HEK293 (cell line): ENCODE measurements at regions of chr17 and their contacts with region 1.

Region 1: DNA sequence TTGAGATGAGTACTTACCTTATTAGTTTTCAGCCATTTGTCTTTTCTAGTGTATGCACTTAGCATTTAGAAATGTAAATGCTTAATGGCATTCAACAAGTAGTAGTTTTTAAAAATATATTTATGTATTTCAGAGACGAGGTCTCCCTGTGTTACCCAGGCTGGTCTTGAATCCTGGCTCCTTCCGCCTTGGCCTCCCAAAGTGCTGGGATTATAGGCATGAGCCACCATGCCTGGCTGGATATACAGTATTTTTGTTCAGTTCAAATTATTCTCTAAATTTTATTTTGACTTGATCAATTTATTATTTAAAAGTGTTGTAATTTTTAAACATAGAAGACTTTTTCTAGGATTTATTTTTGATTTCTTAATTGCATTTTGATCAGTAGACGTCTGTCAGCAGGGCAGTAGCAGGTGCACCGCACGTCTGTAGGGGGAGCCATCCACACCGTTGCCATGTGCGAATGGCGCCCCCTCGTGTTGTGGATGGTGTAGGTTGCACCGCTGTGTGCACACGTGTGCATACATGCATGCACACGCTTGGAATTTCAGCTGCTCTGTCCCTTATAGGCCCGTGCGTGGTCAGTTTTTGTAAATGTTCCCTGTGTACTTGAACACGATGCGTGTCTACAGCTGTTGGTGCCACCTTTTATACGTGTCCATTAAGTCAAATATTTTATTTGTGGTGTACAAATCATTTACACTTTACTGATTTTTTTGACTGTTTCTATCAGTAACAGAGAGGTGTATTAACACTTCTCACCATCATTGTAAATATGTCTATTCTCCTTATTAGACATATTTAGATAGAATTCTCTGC is 30.6 kb downstream of the RPTOR start:
- H3K4me3 ChIP-seq: no peak overlapping the region
- H3K27ac ChIP-seq: no peak overlapping the region
- H3K4me1 ChIP-seq: no peaks in the 10 kb centered on the region
- CTCF ChIP-seq: peak; percentile 98

Region 2: GRCh38 chr17:80406146-80406545 is 169.1 kb before region 1 on chr17:
- CTCF ChIA-PET with region 1: no interaction called
- POLR2A ChIA-PET with region 1: no interaction called
- H3K4me3 ChIP-seq: no peak overlapping the region
- H3K27ac ChIP-seq: no peak overlapping the region
- H3K4me1 ChIP-seq: 0 out of 2 replicates have a peak, but pooled peaks cover 4% of the 10 kb centered on the region
- CTCF ChIP-seq: no peak

Region 3: GRCh38 chr17:80441133-80441578 is 134.1 kb before region 1 on chr17:
- CTCF ChIA-PET with region 1: interaction called, 13 read pairs
- POLR2A ChIA-PET with region 1: no interaction called
- H3K4me3 ChIP-seq: no peak overlapping the region
- H3K27ac ChIP-seq: no peak overlapping the region
- H3K4me1 ChIP-seq: no peaks in the 10 kb centered on the region
- CTCF ChIP-seq: no peak

Region 4: DNA sequence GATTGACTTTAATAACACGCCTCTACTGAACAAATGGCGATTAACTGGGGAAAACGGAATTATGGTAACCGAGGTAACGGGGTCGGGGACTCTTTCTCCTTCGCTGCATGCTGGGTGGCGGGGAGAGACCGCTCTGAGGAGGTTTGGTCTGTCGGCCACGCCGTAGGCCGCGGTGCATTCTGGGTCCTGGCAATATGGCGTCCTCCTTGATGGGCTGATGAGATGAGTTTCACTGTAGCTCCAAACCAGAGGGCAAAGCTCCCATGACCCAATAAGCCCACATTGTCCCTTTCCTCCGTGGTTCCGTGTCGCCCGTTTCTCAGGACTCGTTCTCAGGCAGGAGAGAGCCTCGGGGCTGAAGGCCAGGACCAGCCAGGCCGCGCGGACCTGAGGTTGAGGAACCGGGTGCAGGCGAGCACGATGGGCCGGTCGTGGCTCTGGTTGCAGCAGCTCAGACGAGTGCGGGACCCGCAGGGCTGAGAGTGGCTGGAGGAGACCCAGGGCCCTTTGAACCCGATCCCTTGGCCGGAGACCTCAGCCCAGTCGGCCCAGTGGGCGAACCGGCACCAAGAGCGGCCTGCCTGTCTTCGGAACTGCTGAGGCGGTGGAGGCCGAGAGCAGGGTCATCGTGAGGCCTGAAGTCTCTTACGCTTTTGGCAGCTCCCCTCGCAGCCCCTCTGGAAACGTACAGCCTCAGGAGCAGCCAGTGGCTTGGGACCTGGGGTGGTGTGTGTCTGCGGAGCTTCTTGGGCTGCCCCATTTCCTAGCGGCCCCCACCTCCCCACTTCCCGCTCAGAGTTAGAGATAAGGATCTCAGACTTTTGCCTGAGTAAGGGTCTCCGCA is 30.4 kb before region 1 on chr17 and contains the start of gene RPTOR:
- CTCF ChIA-PET with region 1: interaction called, 25 read pairs
- POLR2A ChIA-PET with region 1: no interaction called
- H3K4me3 ChIP-seq: peak within 1 kb of the TSS; percentile 99
- H3K27ac ChIP-seq: peak within 1 kb of the TSS; percentile 68
- H3K4me1 ChIP-seq: peaks cover 10% of the 10 kb centered on the region
- CTCF ChIP-seq: no peak

Region 5: GRCh38 chr17:80586846-80587228 is 11.6 kb after region 1 on chr17:
- CTCF ChIA-PET with region 1: interaction called, 31 read pairs
- POLR2A ChIA-PET with region 1: no interaction called
- H3K4me3 ChIP-seq: no peak overlapping the region
- H3K27ac ChIP-seq: no peak overlapping the region
- H3K4me1 ChIP-seq: no peaks in the 10 kb centered on the region
- CTCF ChIP-seq: no peak

Region 6: DNA sequence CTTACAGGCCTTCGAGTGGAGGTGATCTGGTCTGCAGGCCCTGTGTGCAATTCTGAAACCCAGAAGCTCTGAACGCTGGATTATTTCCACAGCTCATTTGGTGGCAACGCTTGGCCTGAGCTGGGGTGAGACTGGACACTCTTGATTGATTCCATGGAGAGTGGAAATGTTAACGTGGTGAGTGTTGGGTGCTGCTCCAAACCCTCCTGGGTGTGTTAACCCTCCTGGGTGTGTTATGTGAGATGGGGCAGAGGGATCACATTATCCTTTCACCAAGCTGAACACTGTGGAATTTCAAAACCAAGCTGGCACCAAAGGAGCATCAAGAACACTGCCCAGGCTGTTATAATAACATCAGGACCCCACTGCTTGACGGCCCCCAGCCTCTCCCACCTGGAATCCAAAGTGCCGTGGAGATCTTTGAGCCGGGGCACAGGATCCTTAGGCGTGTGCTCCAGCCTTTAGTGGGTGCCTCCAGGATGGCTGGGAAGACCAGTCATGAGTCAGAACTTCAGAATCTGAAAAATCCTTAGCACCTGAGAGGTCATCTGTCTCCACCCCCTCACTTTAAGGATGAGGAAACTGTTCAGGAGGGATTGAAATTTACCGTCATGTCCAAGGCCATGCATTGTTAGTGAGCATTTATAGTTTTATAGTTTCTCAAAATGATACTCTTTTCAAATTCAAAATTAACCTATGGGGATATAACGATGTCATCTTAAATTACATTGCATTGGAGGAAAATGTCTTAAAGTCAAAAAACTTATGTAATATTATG is 44.5 kb after region 1 on chr17:
- CTCF ChIA-PET with region 1: interaction called, 14 read pairs
- POLR2A ChIA-PET with region 1: no interaction called
- H3K4me3 ChIP-seq: no peak overlapping the region
- H3K27ac ChIP-seq: no peak overlapping the region
- H3K4me1 ChIP-seq: peaks cover 8% of the 10 kb centered on the region
- CTCF ChIP-seq: no peak

Region 7: GRCh38 chr17:80682372-80682771 is 107.1 kb after region 1 on chr17:
- CTCF ChIA-PET with region 1: no interaction called
- POLR2A ChIA-PET with region 1: no interaction called
- H3K4me3 ChIP-seq: no peak overlapping the region
- H3K27ac ChIP-seq: no peak overlapping the region
- H3K4me1 ChIP-seq: peaks cover 13% of the 10 kb centered on the region
- CTCF ChIP-seq: no peak